ENCODE measurements at regions of chr11 and their contacts with region 1.

Region 1: GRCh38 chr11:12331239-12331874 is 46.0 kb upstream of the PARVA start:
- DNase-seq: peak; percentile 47 to 83
- ATAC-seq: peak; percentile 95 to 97
- H3K4me3 ChIP-seq: no peak overlapping the region
- H3K27ac ChIP-seq: no peak overlapping the region
- H3K4me1 ChIP-seq: peaks cover 8% of the 10 kb centered on the region; the same call in 1 of the 3 replicates
- CTCF ChIP-seq: peak; percentile 94
- EP300 ChIP-seq: no peak
- POLR2A ChIP-seq: no peak
- RAD21 ChIP-seq: peak; percentile 97 to 98

Region 2: GRCh38 chr11:12222055-12222792 is 109.1 kb before region 1 on chr11:
- CTCF ChIA-PET with region 1: no interaction called
- POLR2A ChIA-PET with region 1: no interaction called
- DNase-seq: no peak
- ATAC-seq: no peak
- H3K4me3 ChIP-seq: no peak overlapping the region
- H3K27ac ChIP-seq: no peak overlapping the region
- H3K4me1 ChIP-seq: peaks cover 17% of the 10 kb centered on the region
- CTCF ChIP-seq: no peak
- EP300 ChIP-seq: no peak
- POLR2A ChIP-seq: no peak
- RAD21 ChIP-seq: no peak

Region 3: DNA sequence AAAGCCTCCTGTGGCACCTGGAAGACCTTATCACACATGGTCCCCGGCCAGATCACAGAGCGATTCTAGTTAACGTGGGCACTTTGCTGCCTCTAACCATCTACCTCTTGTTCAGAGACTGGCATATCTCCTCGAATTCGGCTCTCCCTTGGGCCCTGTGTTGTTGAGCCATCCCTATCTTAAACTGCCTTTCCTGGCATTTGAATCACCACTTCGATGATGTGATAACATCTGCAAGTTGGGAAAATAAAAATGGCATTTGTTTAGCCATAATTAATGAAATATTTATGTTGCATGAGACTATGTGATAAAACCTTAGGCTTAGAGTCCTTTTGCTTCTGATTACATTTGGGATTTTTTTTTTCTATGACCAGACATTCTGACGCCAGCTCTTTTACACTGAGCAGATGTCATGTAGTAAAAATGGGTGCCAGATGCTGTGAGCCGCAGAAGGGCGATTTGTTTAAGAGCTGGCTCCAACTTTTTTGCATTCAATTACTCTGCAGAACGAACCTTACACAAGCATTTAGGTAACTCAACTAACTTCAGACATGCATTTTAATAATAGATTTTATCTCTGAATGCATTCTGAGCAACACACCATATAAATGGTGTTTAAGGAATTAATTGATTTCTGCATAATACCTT is 12.4 kb before region 1 on chr11:
- CTCF ChIA-PET with region 1: interaction called, 41 read pairs
- POLR2A ChIA-PET with region 1: interaction called, 4 read pairs
- DNase-seq: no peak
- ATAC-seq: no peak
- H3K4me3 ChIP-seq: no peak overlapping the region
- H3K27ac ChIP-seq: no peak overlapping the region
- H3K4me1 ChIP-seq: no peaks in the 10 kb centered on the region
- CTCF ChIP-seq: no peak
- EP300 ChIP-seq: no peak
- POLR2A ChIP-seq: no peak
- RAD21 ChIP-seq: no peak

Region 4: DNA sequence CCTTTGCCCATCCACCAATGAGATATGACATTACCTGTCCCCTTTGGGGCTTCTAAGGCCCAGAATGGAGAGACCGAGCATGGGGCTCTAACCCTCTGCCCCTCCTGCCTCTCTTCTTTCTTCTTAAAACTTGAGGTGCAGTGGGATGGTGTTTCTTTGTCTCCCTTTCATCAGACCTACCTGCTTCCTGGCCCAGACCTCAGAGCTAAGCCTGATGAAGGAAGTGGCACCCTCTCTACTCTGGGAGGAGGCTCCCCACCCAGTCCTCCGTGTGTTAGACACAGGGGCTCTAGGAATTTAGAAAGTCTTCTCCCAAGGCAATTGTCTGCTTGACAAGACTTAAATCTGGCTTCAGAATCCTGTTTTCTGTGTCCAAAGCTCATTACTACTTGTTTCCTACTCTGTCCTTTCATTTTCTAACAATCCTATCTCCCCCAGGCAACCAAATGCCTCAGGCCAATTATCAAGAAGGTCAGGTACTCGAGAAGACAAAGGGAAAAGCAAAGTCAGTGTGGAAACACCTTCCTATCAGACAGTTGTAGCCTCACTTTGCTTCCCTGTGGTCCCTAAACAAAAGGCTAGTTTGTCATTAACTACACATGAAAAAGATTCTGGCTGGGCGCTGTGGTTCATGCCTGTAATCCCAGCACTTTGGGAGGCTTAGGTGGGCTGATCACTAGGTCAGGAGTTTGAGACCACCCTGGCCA is 25.7 kb after region 1 on chr11:
- CTCF ChIA-PET with region 1: interaction called, 11 read pairs
- POLR2A ChIA-PET with region 1: no interaction called
- DNase-seq: no peak
- ATAC-seq: no peak
- H3K4me3 ChIP-seq: no peak overlapping the region
- H3K27ac ChIP-seq: no peak overlapping the region
- H3K4me1 ChIP-seq: no peaks in the 10 kb centered on the region
- CTCF ChIP-seq: no peak
- EP300 ChIP-seq: no peak
- POLR2A ChIP-seq: no peak
- RAD21 ChIP-seq: no peak

Region 5: GRCh38 chr11:12680246-12680939 is 349.0 kb after region 1 on chr11:
- CTCF ChIA-PET with region 1: interaction called, 12 read pairs
- POLR2A ChIA-PET with region 1: no interaction called
- DNase-seq: peak in 1 of 2 experiments; percentile 92
- ATAC-seq: peak; percentile 72 to 74
- H3K4me3 ChIP-seq: peak overlapping the region; percentile 90
- H3K27ac ChIP-seq: peak overlapping the region; percentile 92 to 98
- H3K4me1 ChIP-seq: peaks cover 73% of the 10 kb centered on the region
- CTCF ChIP-seq: no peak
- EP300 ChIP-seq: no peak
- POLR2A ChIP-seq: peak; percentile 38; the same call in 1 of the 2 replicates
- RAD21 ChIP-seq: no peak; a peak in 1 of 5 replicates

Region 6: GRCh38 chr11:12888525-12889158 is 557.3 kb after region 1 on chr11:
- CTCF ChIA-PET with region 1: interaction called, 65 read pairs
- POLR2A ChIA-PET with region 1: no interaction called
- DNase-seq: peak; percentile 64 to 77
- ATAC-seq: peak; percentile 70 to 81
- H3K4me3 ChIP-seq: no peak overlapping the region
- H3K27ac ChIP-seq: peak overlapping the region; percentile 20 to 30; a peak in 3 of 6 replicates
- H3K4me1 ChIP-seq: peaks cover 24% of the 10 kb centered on the region
- CTCF ChIP-seq: peak; percentile 86
- EP300 ChIP-seq: no peak
- POLR2A ChIP-seq: no peak
- RAD21 ChIP-seq: peak; percentile 88 to 89

Region 7: DNA sequence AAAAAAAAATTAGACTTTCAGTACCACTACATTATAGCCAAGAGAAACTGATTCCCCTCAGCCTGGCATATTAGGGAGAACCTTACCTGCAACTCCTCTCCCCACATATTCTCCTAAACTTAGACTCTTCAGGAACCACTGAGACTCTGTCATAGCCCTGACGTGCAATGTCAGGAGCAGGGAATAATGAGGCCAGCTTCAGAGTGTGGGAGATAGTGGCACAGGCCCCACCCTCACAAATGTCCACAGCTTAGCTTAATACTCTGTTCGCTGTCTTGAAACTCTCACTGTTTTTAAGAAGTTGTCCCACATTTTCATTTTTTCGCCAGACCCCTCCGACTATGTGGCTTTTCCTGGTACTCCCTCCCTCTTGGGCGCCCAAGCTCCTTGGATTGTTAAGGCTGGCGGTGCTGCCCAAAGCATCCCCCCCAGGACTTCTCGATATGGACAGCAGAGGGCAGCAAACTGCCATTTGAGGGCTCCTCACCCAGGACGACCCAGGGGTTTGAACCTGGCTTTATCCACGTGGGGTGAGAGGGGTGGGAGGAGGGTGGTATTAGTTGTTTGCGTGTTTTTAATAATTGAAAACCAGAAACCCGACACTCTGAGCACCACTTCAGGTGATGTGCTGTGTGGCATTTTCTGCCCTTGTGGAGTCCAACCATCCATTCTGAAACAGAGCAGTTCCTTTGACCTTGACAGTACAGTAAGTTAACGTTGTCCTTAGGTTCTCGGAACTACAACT is 632.6 kb after region 1 on chr11:
- CTCF ChIA-PET with region 1: interaction called, 85 read pairs
- POLR2A ChIA-PET with region 1: interaction called, 4 read pairs
- DNase-seq: peak; percentile 70 to 91
- ATAC-seq: peak; percentile 88 to 98
- H3K4me3 ChIP-seq: no peak overlapping the region
- H3K27ac ChIP-seq: peak overlapping the region; percentile 43 to 70; a peak in 4 of 6 replicates
- H3K4me1 ChIP-seq: peaks cover 14% of the 10 kb centered on the region
- CTCF ChIP-seq: peak; percentile 91
- EP300 ChIP-seq: no peak
- POLR2A ChIP-seq: no peak
- RAD21 ChIP-seq: peak; percentile 98 to 99